ENCODE measurements at regions of chr13 and their contacts with region 1.

Region 1: GRCh38 chr13:108495646-108496361 is 133.6 kb upstream of the MYO16 start:
- DNase-seq: peak in 4 of 5 donors; percentile 5 to 44 (median 8)
- H3K4me3 ChIP-seq: peak overlapping the region; percentile 47 to 56
- H3K4me3 Mint-ChIP-seq: peak overlapping the region; percentile 83 to 97 (median 90)
- H3K27ac ChIP-seq: no peak overlapping the region
- H3K27ac Mint-ChIP-seq: peak overlapping the region in 6 of 7 donors; percentile 25 to 89 (median 48)
- H3K4me1 ChIP-seq: peaks cover 20% of the 10 kb centered on the region
- H3K4me1 Mint-ChIP-seq: peaks cover 4 to 39% (median 24%) of the 10 kb centered on the region in 4 donors
- H3K27me3 ChIP-seq: peaks cover 7% of the 10 kb centered on the region
- H3K27me3 Mint-ChIP-seq: peaks cover 7 to 9% of the 10 kb centered on the region in 2 donors

Region 2: GRCh38 chr13:108218044-108218974 is 277.5 kb before region 1 on chr13 and contains the start of gene ABHD13:
- CTCF ChIA-PET with region 1: no interaction called
- POLR2A ChIA-PET with region 1: no interaction called
- intact Hi-C with region 1: loop called (anchors 5 kb)
- DNase-seq: peak; percentile 91 to 96 (median 92)
- H3K4me3 ChIP-seq: peak within 1 kb of the TSS; percentile 68 to 94
- H3K4me3 Mint-ChIP-seq: peak within 1 kb of the TSS; percentile 94 to 99 (median 96)
- H3K27ac ChIP-seq: peak within 1 kb of the TSS; percentile 86
- H3K27ac Mint-ChIP-seq: peak within 1 kb of the TSS; percentile 95 to 99 (median 96)
- H3K4me1 ChIP-seq: peaks cover 69% of the 10 kb centered on the region
- H3K4me1 Mint-ChIP-seq: peaks cover 34 to 76% (median 50%) of the 10 kb centered on the region in 4 donors
- H3K27me3 ChIP-seq: no peaks in the 10 kb centered on the region
- H3K27me3 Mint-ChIP-seq: no peaks in the 10 kb centered on the region
- total RNA-seq, gene ABHD13: 22.9 to 23.2 TPM

Region 3: GRCh38 chr13:108407495-108407894 is 88.3 kb before region 1 on chr13:
- CTCF ChIA-PET with region 1: interaction called, 3 read pairs
- POLR2A ChIA-PET with region 1: interaction called, 8 read pairs
- intact Hi-C with region 1: loop called (anchors 2 kb)
- DNase-seq: no peak
- H3K4me3 ChIP-seq: no peak overlapping the region
- H3K4me3 Mint-ChIP-seq: peak overlapping the region in 1 of 8 donors; percentile 27
- H3K27ac ChIP-seq: no peak overlapping the region
- H3K27ac Mint-ChIP-seq: peak overlapping the region in 6 of 7 donors; percentile 22 to 87 (median 62)
- H3K4me1 ChIP-seq: peaks cover 52% of the 10 kb centered on the region
- H3K4me1 Mint-ChIP-seq: peaks cover 41 to 71% (median 57%) of the 10 kb centered on the region in 4 donors
- H3K27me3 ChIP-seq: no peaks in the 10 kb centered on the region
- H3K27me3 Mint-ChIP-seq: no peaks in the 10 kb centered on the region

Region 4: GRCh38 chr13:108980237-108980636 is 484.4 kb after region 1 on chr13:
- CTCF ChIA-PET with region 1: no interaction called
- POLR2A ChIA-PET with region 1: no interaction called
- intact Hi-C with region 1: no loop called
- DNase-seq: no peak
- H3K4me3 ChIP-seq: no peak overlapping the region
- H3K4me3 Mint-ChIP-seq: no peak overlapping the region
- H3K27ac ChIP-seq: no peak overlapping the region
- H3K27ac Mint-ChIP-seq: no peak overlapping the region
- H3K4me1 ChIP-seq: no peaks in the 10 kb centered on the region
- H3K4me1 Mint-ChIP-seq: peaks cover 0 to 1% (median 0%) of the 10 kb centered on the region in 4 donors
- H3K27me3 ChIP-seq: no peaks in the 10 kb centered on the region
- H3K27me3 Mint-ChIP-seq: peaks cover 7 to 10% of the 10 kb centered on the region in 2 donors

Measured in CD4-positive, alpha-beta memory T cell (primary cell).